Activated CD8-positive, alpha-beta memory T cell treated with anti-CD3 and anti-CD28 coated beads, Interleukin-2, amount 10 ng/mL, durations not matched to agents 7 days and 5 days (primary cell): ENCODE measurements at regions of chr16 and their contacts with region 1.

Region 1: DNA sequence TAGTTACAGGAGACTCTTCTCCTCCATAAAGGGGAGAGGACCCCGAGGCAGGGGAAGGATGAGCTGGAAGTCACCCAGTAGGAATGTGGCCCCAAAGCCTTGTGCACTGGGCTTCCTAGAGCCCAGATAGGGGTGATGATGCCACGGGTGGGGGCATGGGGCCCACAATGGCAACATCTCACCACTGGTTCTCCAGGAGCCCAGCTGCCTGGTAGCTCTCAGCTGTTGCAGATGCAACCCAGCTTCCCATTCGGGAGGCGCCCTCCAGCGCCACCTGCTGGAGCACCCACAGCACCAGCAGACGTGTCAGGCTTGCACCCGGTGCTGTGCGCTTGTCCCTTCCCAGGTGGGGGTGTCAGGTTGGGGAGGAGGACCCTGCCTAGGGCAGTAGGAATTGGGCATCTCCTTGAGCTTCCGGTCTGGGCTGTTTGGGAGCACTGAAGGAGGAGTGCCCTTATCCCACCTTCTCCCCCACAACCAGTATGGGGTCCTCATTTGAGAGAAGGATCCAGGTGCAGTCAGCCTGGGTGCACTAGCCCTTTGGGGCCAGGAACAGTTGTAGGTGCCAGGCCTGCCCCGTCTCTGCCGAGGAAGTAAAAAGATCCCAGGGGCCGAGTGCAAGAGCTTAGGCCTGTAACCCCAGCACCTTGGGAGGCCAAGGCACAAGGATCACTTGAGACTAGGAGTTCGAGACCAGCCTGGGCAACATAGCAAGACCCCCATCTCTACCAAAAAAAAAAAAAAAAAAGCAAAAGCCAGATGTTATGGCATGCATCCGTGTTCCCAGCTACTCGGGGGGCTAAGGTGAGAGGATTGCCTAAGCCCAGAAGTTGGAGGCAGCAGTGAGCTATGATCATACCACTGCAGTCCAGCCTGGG is 14.4 kb downstream of the CDIPT start:
- DNase-seq: peak; percentile 87
- ATAC-seq: peak; percentile 93
- H3K4me3 Mint-ChIP-seq: no peak overlapping the region
- H3K27ac Mint-ChIP-seq: no peak overlapping the region
- H3K4me1 Mint-ChIP-seq: no peaks in the 10 kb centered on the region
- H3K27me3 Mint-ChIP-seq: no peaks in the 10 kb centered on the region

Region 2: DNA sequence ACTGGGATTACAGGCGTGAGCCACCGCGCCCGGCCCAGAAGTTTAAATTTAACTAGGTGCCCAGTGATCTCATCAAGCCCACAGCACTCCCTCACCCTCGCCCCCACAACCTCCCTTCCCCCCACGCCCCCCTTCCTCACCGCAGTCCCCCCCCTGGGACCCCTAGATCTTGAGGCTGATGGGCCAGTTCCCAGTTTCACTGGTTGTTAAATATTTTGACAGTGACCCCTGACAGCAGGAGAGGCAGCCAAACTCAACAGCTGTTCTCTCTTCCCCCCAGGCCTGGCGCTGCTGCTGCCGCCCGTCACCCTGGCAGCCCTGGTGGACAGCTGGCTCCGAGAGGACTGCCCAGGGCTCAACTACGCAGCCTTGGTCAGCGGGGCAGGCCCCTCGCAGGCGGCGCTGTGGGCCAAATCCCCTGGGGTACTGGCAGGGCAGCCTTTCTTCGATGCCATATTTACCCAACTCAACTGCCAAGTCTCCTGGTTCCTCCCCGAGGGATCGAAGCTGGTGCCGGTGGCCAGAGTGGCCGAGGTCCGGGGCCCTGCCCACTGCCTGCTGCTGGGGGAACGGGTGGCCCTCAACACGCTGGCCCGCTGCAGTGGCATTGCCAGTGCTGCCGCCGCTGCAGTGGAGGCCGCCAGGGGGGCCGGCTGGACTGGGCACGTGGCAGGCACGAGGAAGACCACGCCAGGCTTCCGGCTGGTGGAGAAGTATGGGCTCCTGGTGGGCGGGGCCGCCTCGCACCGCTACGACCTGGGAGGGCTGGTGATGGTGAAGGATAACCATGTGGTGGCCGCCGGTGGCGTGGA is 154.1 kb before region 1 on chr16:
- CTCF ChIA-PET with region 1: interaction called, 109 read pairs
- DNase-seq: no peak
- ATAC-seq: no peak
- H3K4me3 Mint-ChIP-seq: no peak overlapping the region
- H3K27ac Mint-ChIP-seq: no peak overlapping the region
- H3K4me1 Mint-ChIP-seq: peaks cover 10% of the 10 kb centered on the region
- H3K27me3 Mint-ChIP-seq: no peaks in the 10 kb centered on the region

Region 3: GRCh38 chr16:29805378-29806098 is 43.1 kb before region 1 on chr16:
- CTCF ChIA-PET with region 1: interaction called, 31 read pairs
- DNase-seq: peak; percentile 99
- ATAC-seq: peak; percentile 70
- H3K4me3 Mint-ChIP-seq: peak overlapping the region; percentile 94
- H3K27ac Mint-ChIP-seq: peak overlapping the region; percentile 96
- H3K4me1 Mint-ChIP-seq: peaks cover 44% of the 10 kb centered on the region
- H3K27me3 Mint-ChIP-seq: no peaks in the 10 kb centered on the region

Region 4: DNA sequence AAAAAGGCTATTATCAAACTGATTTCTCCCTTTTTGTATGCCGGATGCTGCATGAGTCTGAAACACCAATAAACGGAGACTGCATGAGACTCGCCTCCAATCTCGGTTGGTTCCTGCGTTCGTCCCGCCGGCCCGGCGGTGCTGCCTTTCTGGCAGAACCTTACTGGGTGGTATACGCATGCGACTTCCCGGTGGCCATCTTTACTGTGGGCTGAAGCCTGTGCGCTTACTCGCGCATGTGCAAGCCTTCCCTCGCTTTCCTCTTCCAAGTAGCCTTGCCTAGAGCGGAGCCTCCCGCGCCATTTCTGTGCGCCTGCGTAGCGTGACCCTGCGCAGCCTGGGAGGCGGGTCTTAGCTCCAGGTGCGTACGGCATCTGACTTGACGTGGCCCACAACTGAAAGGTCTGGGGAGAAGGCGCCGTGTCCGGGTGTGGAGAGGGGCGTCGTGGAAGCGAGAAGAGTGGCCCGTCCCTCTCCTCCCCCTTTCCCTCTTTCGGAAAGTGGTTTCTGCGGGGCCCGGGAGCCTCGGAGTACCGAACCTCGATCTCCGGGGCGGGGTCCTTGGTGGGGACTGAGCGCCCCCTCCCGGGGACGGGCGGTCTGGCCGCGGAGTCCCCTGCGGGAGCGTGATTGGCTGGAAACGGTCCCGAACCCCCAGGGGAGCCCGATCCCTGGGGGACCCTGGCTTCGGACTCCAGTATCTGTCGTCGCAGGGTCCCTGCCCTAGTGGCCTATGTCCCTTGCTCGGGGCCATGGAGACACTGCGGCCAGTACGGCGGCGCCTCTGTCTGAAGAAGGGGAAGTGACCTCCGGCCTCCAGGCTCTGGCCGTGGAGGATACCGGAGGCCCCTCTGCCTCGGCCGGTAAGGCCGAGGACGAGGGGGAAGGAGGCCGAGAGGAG is 32.6 kb before region 1 on chr16 and contains the start of gene PAGR1:
- CTCF ChIA-PET with region 1: interaction called, 192 read pairs
- DNase-seq: peak; percentile 99
- ATAC-seq: peak; percentile 79
- H3K4me3 Mint-ChIP-seq: peak within 1 kb of the TSS; percentile 99
- H3K27ac Mint-ChIP-seq: peak within 1 kb of the TSS; percentile 88
- H3K4me1 Mint-ChIP-seq: peaks cover 65% of the 10 kb centered on the region
- H3K27me3 Mint-ChIP-seq: peaks cover 12% of the 10 kb centered on the region
- total RNA-seq, gene PAGR1: 34.3 to 35.2 TPM

Region 5: GRCh38 chr16:29834079-29834478 is 14.6 kb before region 1 on chr16:
- CTCF ChIA-PET with region 1: interaction called, 192 read pairs
- DNase-seq: no peak
- ATAC-seq: no peak
- H3K4me3 Mint-ChIP-seq: no peak overlapping the region
- H3K27ac Mint-ChIP-seq: no peak overlapping the region
- H3K4me1 Mint-ChIP-seq: no peaks in the 10 kb centered on the region
- H3K27me3 Mint-ChIP-seq: no peaks in the 10 kb centered on the region

Region 6: DNA sequence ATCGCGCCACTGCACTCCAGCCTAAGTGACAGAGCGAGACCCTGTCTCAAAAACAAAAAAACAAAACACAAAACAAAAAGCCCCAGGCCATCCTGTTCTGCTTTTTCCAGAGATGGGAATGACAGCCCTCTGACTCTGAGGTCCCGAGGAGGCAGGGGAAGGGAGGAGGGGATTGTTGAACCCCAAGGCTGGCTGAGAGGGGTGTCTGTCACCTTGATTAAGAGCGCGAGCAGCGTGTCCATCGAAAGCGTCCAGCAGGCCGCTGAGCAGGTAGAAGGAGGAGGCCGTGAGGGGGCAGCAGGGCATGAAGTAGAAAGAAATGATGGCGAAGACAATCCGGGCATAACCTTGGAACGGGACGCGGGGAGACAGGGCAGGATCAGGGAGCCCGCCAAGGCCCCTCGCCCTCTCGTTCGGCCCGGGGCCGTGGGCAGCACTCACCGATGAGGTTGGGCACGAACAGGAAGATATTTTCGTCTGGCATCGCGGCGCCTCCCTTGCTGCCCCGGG is 13.8 kb after region 1 on chr16:
- CTCF ChIA-PET with region 1: interaction called, 14 read pairs
- DNase-seq: no peak
- ATAC-seq: peak; percentile 0
- H3K4me3 Mint-ChIP-seq: peak overlapping the region; percentile 99
- H3K27ac Mint-ChIP-seq: peak overlapping the region; percentile 98
- H3K4me1 Mint-ChIP-seq: peaks cover 19% of the 10 kb centered on the region
- H3K27me3 Mint-ChIP-seq: peaks cover 2% of the 10 kb centered on the region

Region 7: GRCh38 chr16:29926005-29926710 is 77.5 kb after region 1 on chr16 and contains the start of gene KCTD13:
- CTCF ChIA-PET with region 1: interaction called, 12 read pairs
- DNase-seq: peak; percentile 90
- ATAC-seq: peak; percentile 95
- H3K4me3 Mint-ChIP-seq: peak within 1 kb of the TSS; percentile 89
- H3K27ac Mint-ChIP-seq: peak within 1 kb of the TSS; percentile 93
- H3K4me1 Mint-ChIP-seq: peaks cover 30% of the 10 kb centered on the region
- H3K27me3 Mint-ChIP-seq: peaks cover 2% of the 10 kb centered on the region
- total RNA-seq, gene KCTD13: 44.6 to 48.4 TPM

Region 8: DNA sequence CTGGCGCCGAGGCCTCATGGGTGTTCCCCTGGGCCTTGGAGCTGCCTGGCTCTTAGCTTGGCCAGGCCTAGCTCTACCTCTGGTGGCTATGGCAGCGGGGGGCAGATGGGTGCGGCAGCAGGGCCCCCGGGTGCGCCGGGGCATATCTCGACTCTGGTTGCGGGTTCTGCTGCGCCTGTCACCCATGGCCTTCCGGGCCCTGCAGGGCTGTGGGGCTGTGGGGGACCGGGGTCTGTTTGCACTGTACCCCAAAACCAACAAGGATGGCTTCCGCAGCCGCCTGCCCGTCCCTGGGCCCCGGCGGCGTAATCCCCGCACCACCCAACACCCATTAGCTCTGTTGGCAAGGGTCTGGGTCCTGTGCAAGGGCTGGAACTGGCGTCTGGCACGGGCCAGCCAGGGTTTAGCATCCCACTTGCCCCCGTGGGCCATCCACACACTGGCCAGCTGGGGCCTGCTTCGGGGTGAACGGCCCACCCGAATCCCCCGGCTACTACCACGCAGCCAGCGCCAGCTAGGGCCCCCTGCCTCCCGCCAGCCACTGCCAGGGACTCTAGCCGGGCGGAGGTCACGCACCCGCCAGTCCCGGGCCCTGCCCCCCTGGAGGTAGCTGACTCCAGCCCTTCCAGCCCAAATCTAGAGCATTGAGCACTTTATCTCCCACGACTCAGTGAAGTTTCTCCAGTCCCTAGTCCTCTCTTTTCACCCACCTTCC is 138.9 kb after region 1 on chr16:
- CTCF ChIA-PET with region 1: no interaction called
- DNase-seq: no peak
- ATAC-seq: no peak
- H3K4me3 Mint-ChIP-seq: no peak overlapping the region
- H3K27ac Mint-ChIP-seq: no peak overlapping the region
- H3K4me1 Mint-ChIP-seq: no peaks in the 10 kb centered on the region
- H3K27me3 Mint-ChIP-seq: no peaks in the 10 kb centered on the region